ENCODE measurements at regions of chr9 and their contacts with region 1.

Region 1: DNA sequence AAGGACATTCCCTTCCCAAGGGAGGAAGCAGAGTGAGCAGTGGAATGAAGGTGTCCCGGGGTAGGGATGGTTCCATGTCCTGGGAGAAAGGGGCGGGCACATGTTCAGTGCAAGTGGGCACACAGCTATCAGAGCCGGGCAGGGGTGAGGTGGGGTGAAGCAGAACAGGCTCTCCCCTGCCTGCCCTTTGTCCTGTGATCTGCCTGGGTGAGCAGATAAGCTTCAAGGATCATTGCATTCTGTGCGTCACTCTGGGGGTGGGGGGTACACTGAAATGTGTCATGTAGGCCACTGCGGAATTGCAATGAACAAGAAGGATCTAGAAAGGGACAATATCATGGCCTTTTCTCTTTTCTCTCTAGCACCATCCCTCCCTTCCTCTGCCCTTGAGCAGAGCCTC is 61.7 kb upstream of the SHB start:
- DNase-seq: no peak
- ATAC-seq: peak in 4 of 8 donors; percentile 34 to 66 (median 40)
- H3K4me3 ChIP-seq: no peak overlapping the region
- H3K27ac ChIP-seq: no peak overlapping the region
- H3K4me1 ChIP-seq: no peaks in the 10 kb centered on the region
- H3K27me3 ChIP-seq: peaks cover 0 to 16% (median 0%) of the 10 kb centered on the region in 7 donors
- CTCF ChIP-seq: no peak

Region 2: DNA sequence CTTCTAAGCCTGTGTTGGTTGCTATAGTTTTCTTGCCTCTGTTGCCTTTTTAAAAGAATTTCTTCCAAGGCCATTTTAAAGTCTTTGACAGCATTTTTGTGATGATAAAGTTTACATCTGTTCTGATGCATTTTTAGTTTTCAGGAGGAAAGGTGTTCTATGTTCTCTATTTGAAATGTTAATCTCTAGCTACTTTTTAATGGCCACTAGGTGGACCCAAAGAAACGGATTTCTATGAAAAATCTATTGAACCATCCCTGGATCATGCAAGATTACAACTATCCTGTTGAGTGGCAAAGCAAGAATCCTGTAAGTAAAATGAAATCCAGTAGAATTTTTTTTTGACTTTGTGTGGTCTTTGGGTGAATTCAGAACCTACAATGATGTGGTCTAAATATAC is 1497.8 kb before region 1 on chr9:
- intact Hi-C with region 1: no loop called
- DNase-seq: no peak
- ATAC-seq: no peak
- H3K4me3 ChIP-seq: no peak overlapping the region
- H3K27ac ChIP-seq: no peak overlapping the region
- H3K4me1 ChIP-seq: no peaks in the 10 kb centered on the region
- H3K27me3 ChIP-seq: no peaks in the 10 kb centered on the region
- CTCF ChIP-seq: peak in 7 of 9 donors; percentile 40 to 62 (median 51)

Region 3: GRCh38 chr9:38079461-38080031 is 51.2 kb before region 1 on chr9:
- intact Hi-C with region 1: loop called in 1 of 10 experiments (anchors 10 kb)
- DNase-seq: no peak
- ATAC-seq: peak in 3 of 8 donors; percentile 39 to 50 (median 40)
- H3K4me3 ChIP-seq: no peak overlapping the region
- H3K27ac ChIP-seq: peak overlapping the region in 1 of 10 donors; percentile 65
- H3K4me1 ChIP-seq: peaks cover 0 to 49% (median 10%) of the 10 kb centered on the region in 9 donors
- H3K27me3 ChIP-seq: no peaks in the 10 kb centered on the region
- CTCF ChIP-seq: no peak

Region 4: DNA sequence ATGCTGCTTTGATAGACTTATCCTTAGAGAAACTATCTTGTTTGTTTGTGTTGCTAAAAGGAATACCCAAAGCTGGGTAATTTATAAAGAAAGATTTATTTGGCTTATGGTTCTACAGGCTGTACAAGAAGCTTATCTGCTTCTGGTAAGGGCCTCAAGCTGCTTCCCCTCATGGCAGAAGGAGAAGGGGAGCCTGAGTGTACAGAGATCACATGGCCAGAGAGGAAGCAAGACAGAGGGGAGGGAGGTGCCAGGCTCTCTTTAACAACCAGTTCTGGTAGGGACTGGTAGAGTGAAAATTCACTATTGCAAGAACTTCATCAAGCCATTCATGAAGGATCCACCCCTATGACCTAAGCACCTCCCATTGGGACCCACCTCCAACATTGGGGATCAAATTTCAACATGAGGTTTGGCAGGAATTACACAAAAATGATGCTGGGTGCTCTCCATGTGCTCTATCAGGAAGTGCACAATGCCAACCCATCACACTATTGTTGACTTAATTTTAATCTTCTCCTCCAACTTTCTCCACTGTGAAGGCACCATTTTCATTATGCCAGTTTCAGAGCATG is 53.4 kb after region 1 on chr9:
- intact Hi-C with region 1: loop called in 1 of 10 experiments (anchors 10 kb)
- DNase-seq: no peak
- ATAC-seq: no peak
- H3K4me3 ChIP-seq: no peak overlapping the region
- H3K27ac ChIP-seq: no peak overlapping the region
- H3K4me1 ChIP-seq: no peaks in the 10 kb centered on the region
- H3K27me3 ChIP-seq: peaks cover 0 to 9% (median 0%) of the 10 kb centered on the region in 7 donors
- CTCF ChIP-seq: no peak

Measured in heart right ventricle (tissue), 16 donors.